Endothelial cell of umbilical vein (primary cell): ENCODE measurements at regions of chr5 and their contacts with region 1.

Region 1: GRCh38 chr5:137498736-137499505 is at the start of gene SPOCK1:
- DNase-seq: peak; percentile 81
- H3K4me3 ChIP-seq: peak within 1 kb of the TSS; percentile 54 to 93 (median 56)
- H3K27ac ChIP-seq: peak within 1 kb of the TSS; percentile 39
- H3K4me1 ChIP-seq: peaks cover 20% of the 10 kb centered on the region
- H3K27me3 ChIP-seq: peaks cover 10 to 13% of the 10 kb centered on the region in 2 experiments
- CTCF ChIP-seq: peak; percentile 62 to 81
- POLR2A ChIP-seq: peak; percentile 70
- total RNA-seq, gene SPOCK1: 280 and 404 TPM in 2 replicates

Region 2: DNA sequence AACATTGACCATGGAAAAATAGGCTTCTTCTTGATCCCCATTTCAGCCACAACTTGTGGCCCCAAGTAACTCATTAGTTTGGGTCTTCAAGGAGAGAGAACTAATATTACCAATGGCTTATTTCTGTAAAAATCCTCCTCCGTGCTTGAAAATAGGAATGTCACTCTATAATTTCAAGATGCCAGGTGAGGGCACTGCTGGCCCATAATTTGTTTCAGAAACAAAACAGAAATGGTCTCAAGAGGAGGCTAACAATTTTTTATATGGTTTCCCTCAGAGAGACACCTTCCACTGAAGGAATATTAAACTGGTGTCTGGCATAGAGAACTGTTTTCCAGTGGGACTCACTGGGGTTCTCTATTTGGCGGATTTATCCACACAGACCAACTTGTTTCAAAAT is 696.5 kb before region 1 on chr5:
- CTCF ChIA-PET with region 1: interaction called, 9 read pairs
- POLR2A ChIA-PET with region 1: no interaction called
- dilution Hi-C with region 1: no loop called
- intact Hi-C with region 1: loop called (anchors 1 kb)
- DNase-seq: peak; percentile 58
- H3K4me3 ChIP-seq: no peak overlapping the region
- H3K27ac ChIP-seq: no peak overlapping the region
- H3K4me1 ChIP-seq: no peaks in the 10 kb centered on the region
- H3K27me3 ChIP-seq: peaks cover 3 to 12% of the 10 kb centered on the region in 2 experiments
- CTCF ChIP-seq: no peak
- POLR2A ChIP-seq: no peak

Region 3: GRCh38 chr5:137051165-137051564 is 447.8 kb before region 1 on chr5:
- CTCF ChIA-PET with region 1: no interaction called
- POLR2A ChIA-PET with region 1: no interaction called
- dilution Hi-C with region 1: no loop called
- intact Hi-C with region 1: no loop called
- DNase-seq: peak; percentile 30
- H3K4me3 ChIP-seq: no peak overlapping the region
- H3K27ac ChIP-seq: no peak overlapping the region
- H3K4me1 ChIP-seq: no peaks in the 10 kb centered on the region
- H3K27me3 ChIP-seq: no peaks in the 10 kb centered on the region
- CTCF ChIP-seq: peak in 1 of 2 donors; percentile 24
- POLR2A ChIP-seq: no peak

Region 4: DNA sequence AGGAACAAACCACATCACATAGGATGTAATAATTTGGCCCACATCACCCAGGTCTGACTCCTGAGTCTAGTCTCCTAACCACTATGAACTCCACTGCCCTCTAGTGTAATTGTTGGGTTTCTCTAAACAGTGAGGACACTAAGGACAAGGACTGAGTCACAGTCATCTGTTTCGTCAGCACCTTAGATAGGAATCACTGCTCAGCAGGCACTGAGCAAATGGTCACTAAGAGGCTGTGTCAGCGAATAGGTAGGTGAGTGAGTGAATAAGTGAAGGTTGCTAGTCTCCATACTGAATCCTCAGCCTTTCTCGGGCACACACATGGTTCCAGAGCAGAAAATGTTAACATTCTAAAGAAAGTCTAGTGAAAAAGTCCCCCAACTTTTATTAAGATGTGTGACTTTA is 278.4 kb before region 1 on chr5:
- CTCF ChIA-PET with region 1: no interaction called
- POLR2A ChIA-PET with region 1: no interaction called
- dilution Hi-C with region 1: no loop called
- intact Hi-C with region 1: loop called (anchors 5 kb)
- DNase-seq: peak; percentile 80
- H3K4me3 ChIP-seq: no peak overlapping the region
- H3K27ac ChIP-seq: no peak overlapping the region
- H3K4me1 ChIP-seq: no peaks in the 10 kb centered on the region
- H3K27me3 ChIP-seq: no peaks in the 10 kb centered on the region
- CTCF ChIP-seq: peak; percentile 61 to 62
- POLR2A ChIP-seq: no peak

Region 5: DNA sequence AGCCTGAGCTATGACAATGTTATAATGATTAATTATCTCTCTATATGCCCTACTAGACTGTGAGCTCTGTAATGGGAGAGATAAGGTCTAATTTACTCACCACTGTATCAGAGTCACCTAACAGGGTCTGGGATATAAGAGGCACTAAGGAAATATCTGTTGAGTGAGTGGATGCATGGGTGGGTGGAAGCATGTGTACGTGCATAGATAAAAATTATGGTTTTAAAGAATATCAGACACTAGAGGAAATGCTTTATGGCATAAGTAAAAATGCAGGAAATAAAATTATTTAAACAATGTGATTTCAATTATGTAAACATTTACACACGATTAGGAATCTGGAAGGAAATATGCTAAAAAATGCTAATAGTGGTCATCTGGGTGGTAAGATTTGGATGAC is 137.6 kb before region 1 on chr5:
- CTCF ChIA-PET with region 1: interaction called, 3 read pairs
- POLR2A ChIA-PET with region 1: no interaction called
- dilution Hi-C with region 1: no loop called
- intact Hi-C with region 1: loop called (anchors 1 kb)
- DNase-seq: peak; percentile 94
- H3K4me3 ChIP-seq: no peak overlapping the region
- H3K27ac ChIP-seq: peak overlapping the region; percentile 100
- H3K4me1 ChIP-seq: peaks cover 40% of the 10 kb centered on the region
- H3K27me3 ChIP-seq: no peaks in the 10 kb centered on the region
- CTCF ChIP-seq: no peak
- POLR2A ChIP-seq: peak; percentile 53

Region 6: DNA sequence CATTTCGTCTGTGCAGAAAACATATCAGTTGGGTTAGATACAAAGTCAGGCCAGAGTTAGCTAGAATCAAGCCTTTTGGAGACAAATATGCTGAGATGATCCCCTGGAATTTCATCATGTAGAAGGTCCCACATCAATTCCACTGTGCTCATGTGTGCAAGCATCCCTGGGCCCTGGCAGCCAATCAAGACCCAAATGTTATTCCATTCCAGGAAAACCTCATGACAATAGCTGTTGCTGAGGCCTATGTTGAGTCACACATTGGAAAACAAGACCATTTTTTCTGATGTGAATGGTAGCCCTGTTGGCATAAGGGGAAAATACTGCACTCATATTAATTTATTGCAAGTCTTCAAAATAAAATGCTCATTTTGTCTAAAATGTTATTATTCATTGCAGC is 11.3 kb before region 1 on chr5:
- CTCF ChIA-PET with region 1: interaction called, 6 read pairs
- POLR2A ChIA-PET with region 1: no interaction called
- dilution Hi-C with region 1: no loop called
- intact Hi-C with region 1: loop called (anchors 1 kb)
- DNase-seq: peak; percentile 87
- H3K4me3 ChIP-seq: no peak overlapping the region
- H3K27ac ChIP-seq: peak overlapping the region; percentile 77
- H3K4me1 ChIP-seq: peaks cover 28% of the 10 kb centered on the region
- H3K27me3 ChIP-seq: no peaks in the 10 kb centered on the region
- CTCF ChIP-seq: no peak
- POLR2A ChIP-seq: no peak